Kidney (tissue), 22 donors: ENCODE measurements at regions of chr19 and their contacts with region 1.

Region 1: GRCh38 chr19:13262450-13262849 is 112.2 kb downstream of the IER2 start:
- DNase-seq: peak in 2 of 5 donors; percentile 67 to 80
- H3K4me3 ChIP-seq: no peak overlapping the region
- H3K27ac ChIP-seq: no peak overlapping the region
- H3K4me1 ChIP-seq: no peaks in the 10 kb centered on the region
- H3K27me3 ChIP-seq: no peaks in the 10 kb centered on the region
- CTCF ChIP-seq: peak; percentile 56

Region 2: DNA sequence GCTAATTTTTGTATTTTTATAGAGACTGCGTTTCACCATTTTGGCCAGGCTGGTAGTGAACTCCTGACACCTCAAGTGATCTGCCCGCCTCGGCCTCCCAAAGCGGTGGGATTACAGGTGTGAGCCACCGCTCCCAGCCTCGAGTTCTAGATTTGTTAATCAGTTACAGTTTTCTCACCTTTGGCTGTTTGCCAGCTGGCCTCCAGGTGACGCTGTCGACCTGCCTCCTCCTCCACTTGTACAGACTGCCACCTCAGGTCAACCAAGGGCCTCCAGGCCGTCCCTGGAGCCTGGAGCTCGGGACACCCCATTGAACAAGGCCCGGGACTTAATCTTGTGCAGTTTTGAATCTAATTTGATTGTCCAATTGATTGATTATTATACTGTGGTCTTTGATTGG is 66.8 kb before region 1 on chr19:
- intact Hi-C with region 1: loop called (anchors 5 kb)
- DNase-seq: peak in 3 of 5 donors; percentile 39 to 50 (median 47)
- H3K4me3 ChIP-seq: no peak overlapping the region
- H3K27ac ChIP-seq: no peak overlapping the region
- H3K4me1 ChIP-seq: peaks cover 0 to 4% (median 4%) of the 10 kb centered on the region in 3 donors
- H3K27me3 ChIP-seq: no peaks in the 10 kb centered on the region
- CTCF ChIP-seq: no peak